Endothelial cell of umbilical vein (primary cell): ENCODE measurements at regions of chr20 and their contacts with region 1.

Region 1: DNA sequence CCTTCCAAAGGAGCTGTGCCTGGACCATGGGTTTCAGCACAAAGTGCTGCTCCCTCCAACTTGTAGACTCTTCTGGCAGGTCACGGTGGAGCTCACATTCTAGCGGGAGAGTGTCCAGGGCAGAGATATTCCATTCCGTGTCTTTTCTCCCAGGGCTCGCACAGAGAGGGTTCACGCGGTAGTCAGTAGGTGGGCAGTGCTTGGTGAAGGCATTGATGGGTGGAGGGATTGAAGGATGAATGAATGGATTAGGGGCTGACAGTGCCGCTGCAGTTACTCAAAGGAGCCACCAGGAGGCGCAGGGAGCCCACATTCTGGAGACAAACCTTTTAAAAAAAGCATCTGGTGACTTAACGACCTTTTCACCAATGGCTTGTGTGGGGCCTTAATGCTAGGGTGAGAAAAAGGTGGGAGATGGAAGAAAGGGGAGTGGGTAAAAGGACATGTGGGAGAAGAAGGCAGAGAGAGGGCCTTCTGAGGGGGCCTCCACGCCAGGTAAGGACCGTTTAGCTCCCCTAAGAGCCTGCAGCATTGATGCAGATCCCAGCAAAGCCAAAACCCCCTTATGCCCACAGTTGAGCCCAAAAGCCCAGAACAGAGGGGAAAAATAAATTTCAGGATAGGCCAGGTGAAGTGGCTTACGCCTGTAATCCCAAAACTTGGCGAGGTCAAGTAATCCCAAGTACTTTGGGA is 17.5 kb upstream of the FAM110A start:
- DNase-seq: peak; percentile 61
- H3K4me3 ChIP-seq: no peak overlapping the region
- H3K27ac ChIP-seq: no peak overlapping the region
- H3K4me1 ChIP-seq: no peaks in the 10 kb centered on the region
- H3K27me3 ChIP-seq: peaks cover 0 to 2% of the 10 kb centered on the region in 2 experiments
- CTCF ChIP-seq: peak; percentile 97
- POLR2A ChIP-seq: no peak

Region 2: GRCh38 chr20:833450-834150 is 17.5 kb after region 1 on chr20 and contains the start of gene FAM110A:
- CTCF ChIA-PET with region 1: interaction called, 28 read pairs
- POLR2A ChIA-PET with region 1: interaction called, 5 read pairs
- dilution Hi-C with region 1: no loop called
- intact Hi-C with region 1: no loop called
- DNase-seq: peak; percentile 94
- H3K4me3 ChIP-seq: peak within 1 kb of the TSS; percentile 60 to 71 (median 66)
- H3K27ac ChIP-seq: peak within 1 kb of the TSS; percentile 88
- H3K4me1 ChIP-seq: peaks cover 43% of the 10 kb centered on the region
- H3K27me3 ChIP-seq: no peaks in the 10 kb centered on the region
- CTCF ChIP-seq: no peak
- POLR2A ChIP-seq: no peak
- total RNA-seq, gene FAM110A: 4.6 and 5.8 TPM in 2 replicates

Region 3: GRCh38 chr20:884983-885952 is 69.2 kb after region 1 on chr20:
- CTCF ChIA-PET with region 1: interaction called, 7 read pairs
- POLR2A ChIA-PET with region 1: no interaction called
- dilution Hi-C with region 1: no loop called
- intact Hi-C with region 1: loop called (anchors 1 kb)
- DNase-seq: peak; percentile 19
- H3K4me3 ChIP-seq: no peak overlapping the region
- H3K27ac ChIP-seq: no peak overlapping the region
- H3K4me1 ChIP-seq: no peaks in the 10 kb centered on the region
- H3K27me3 ChIP-seq: peaks cover 6 to 12% of the 10 kb centered on the region in 2 experiments
- CTCF ChIP-seq: no peak
- POLR2A ChIP-seq: no peak

Region 4: GRCh38 chr20:1087311-1087905 is 271.3 kb after region 1 on chr20:
- CTCF ChIA-PET with region 1: no interaction called
- POLR2A ChIA-PET with region 1: no interaction called
- dilution Hi-C with region 1: no loop called
- intact Hi-C with region 1: no loop called
- DNase-seq: no peak
- H3K4me3 ChIP-seq: no peak overlapping the region
- H3K27ac ChIP-seq: no peak overlapping the region
- H3K4me1 ChIP-seq: no peaks in the 10 kb centered on the region
- H3K27me3 ChIP-seq: peaks cover 2% of the 10 kb centered on the region in 2 experiments
- CTCF ChIP-seq: no peak
- POLR2A ChIP-seq: no peak

Region 5: DNA sequence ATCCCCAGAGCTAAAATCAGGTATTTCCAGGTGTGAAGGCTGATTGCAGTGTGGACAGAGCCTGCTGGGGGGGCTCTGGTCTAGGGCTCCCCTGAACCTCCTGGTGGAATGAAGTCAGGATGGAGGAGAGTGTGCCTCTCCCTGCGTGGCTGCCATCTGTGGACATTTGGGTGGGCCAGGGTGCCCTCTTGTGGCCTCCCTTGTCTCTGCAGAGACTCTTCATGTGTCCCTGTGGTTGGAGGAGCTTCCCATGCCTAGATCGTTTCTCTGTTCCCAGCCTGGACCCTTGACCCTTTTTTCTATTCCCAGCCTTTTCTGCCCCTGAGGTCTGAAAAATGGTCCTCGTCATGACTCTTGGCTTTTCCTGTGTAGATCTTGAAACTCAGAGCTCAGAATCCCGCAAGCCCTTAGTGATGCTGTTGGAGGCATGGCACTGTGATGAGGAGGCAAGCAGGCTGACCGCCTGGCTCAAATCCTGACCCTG is 292.4 kb after region 1 on chr20:
- CTCF ChIA-PET with region 1: interaction called, 21 read pairs
- POLR2A ChIA-PET with region 1: no interaction called
- dilution Hi-C with region 1: no loop called
- intact Hi-C with region 1: loop called (anchors 1 kb)
- DNase-seq: peak; percentile 35
- H3K4me3 ChIP-seq: no peak overlapping the region
- H3K27ac ChIP-seq: no peak overlapping the region
- H3K4me1 ChIP-seq: no peaks in the 10 kb centered on the region
- H3K27me3 ChIP-seq: peaks cover 9 to 11% of the 10 kb centered on the region in 2 experiments
- CTCF ChIP-seq: peak; percentile 71 to 90
- POLR2A ChIP-seq: no peak

Region 6: DNA sequence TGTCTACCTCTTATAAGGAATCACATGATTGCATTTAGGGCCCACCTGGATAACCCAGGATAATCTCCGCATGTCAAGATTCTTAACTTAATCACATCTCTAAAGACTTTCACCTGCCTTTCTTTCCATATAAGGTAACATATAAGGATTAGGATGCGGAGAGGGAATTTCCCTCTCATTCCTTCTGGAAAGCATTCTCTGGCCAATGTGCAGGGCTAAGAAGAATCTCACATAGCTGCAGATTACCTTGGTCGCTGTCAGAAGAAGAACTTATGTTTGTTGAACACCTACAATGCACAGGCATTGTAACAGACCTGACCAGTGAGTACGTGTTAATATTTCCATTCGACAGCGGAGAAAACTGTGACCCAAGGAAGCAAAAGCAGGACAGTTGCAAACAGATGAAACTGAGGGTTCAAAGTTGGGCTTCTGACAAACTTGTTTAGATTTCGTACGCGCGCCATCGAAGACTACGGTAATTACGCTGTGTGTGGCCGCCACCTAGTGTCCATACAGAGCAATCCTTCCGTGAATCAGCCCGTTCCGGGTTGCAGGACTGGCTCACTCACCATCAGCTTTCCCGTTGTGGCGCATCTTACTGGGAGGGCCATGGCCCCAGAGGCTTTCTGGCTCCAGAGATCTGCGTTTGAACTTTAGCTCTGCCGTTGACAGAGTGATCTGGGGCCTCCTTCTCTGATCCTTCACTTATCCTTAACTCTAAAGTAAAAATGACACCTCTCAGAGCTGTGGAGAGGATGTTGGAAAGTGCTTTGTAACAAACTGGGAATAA is 396.7 kb after region 1 on chr20:
- CTCF ChIA-PET with region 1: interaction called, 15 read pairs
- POLR2A ChIA-PET with region 1: no interaction called
- dilution Hi-C with region 1: no loop called
- intact Hi-C with region 1: loop called (anchors 1 kb)
- DNase-seq: peak; percentile 63
- H3K4me3 ChIP-seq: no peak overlapping the region
- H3K27ac ChIP-seq: no peak overlapping the region
- H3K4me1 ChIP-seq: no peaks in the 10 kb centered on the region
- H3K27me3 ChIP-seq: peaks cover 8 to 39% of the 10 kb centered on the region in 2 experiments
- CTCF ChIP-seq: peak; percentile 81 to 91
- POLR2A ChIP-seq: no peak